ENCODE measurements at regions of chr2 and their contacts with region 1.

Region 1: DNA sequence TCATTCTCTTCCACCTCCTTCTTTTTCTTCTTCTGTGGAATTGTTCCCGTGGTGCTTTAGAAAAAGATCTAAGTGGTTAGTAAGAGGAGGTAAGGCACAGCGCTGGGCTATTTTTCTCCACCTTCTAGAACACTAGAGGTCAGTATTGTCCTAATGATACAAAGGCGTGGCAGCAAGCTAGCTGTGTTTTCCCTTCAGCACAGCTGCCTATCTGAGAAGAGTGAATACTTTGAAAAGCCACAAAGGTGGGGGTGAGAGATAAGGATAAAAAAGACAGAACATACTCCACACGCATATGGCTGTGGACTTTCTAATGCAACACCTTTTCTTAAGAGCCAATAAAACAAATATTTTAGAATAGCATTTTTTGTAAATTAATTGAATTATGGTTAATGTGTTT is 2.1 kb downstream of the CNTNAP5 start:
- DNase-seq: no peak
- ATAC-seq: peak in 1 of 2 donors; percentile 62
- H3K4me3 ChIP-seq: no peak overlapping the region
- H3K27ac ChIP-seq: no peak overlapping the region
- H3K4me1 ChIP-seq: no peaks in the 10 kb centered on the region
- H3K27me3 ChIP-seq: no peaks in the 10 kb centered on the region

Region 2: DNA sequence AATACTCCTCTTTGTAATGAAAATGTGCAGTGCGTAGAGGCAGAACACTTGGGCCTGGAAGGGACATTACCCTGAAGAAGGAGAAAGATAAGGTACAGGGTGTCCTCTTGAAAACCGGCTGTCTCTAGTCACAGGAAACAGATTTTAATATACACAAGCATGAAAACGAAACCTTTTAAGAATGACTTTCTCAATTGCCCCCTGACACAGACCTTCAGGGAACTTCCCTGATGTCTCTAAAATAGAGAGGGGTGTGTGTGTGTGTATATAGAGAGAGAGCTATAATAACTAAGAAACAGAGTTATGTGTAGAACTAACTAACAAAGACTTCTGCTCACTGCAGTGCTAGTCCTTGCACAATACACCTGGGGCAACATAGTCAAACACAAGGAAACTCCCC is 777.9 kb after region 1 on chr2:
- intact Hi-C with region 1: loop called in 2 of 4 experiments (anchors 5 kb)
- DNase-seq: no peak
- ATAC-seq: no peak
- H3K4me3 ChIP-seq: no peak overlapping the region
- H3K27ac ChIP-seq: no peak overlapping the region
- H3K4me1 ChIP-seq: no peaks in the 10 kb centered on the region
- H3K27me3 ChIP-seq: no peaks in the 10 kb centered on the region

Region 3: DNA sequence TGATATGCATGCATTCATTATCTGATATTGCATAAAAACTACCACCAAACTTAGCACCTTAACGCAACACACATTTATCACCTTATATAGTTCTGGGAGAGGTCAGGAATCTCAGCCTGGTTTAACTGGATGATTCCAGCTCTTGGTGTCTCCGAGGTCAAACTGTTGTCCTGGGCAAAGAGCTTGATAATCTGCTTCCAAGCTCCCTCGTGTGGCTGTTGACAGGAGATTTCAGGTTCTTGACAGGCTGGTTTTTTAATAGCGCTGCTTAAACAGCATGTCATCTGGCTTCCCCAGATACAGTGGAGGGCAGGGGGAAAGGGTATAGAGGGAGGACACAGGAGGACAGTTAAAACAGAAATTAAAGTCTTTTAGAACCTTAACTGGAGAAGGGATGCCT is 783.0 kb after region 1 on chr2:
- intact Hi-C with region 1: loop called in 2 of 4 experiments (anchors 5 kb)
- DNase-seq: no peak
- ATAC-seq: peak; percentile 49 to 55
- H3K4me3 ChIP-seq: no peak overlapping the region
- H3K27ac ChIP-seq: no peak overlapping the region
- H3K4me1 ChIP-seq: no peaks in the 10 kb centered on the region
- H3K27me3 ChIP-seq: no peaks in the 10 kb centered on the region

Measured in right cardiac atrium (tissue), 5 donors.